AG04449 (cell line): ENCODE measurements at regions of chr3 and their contacts with region 1.

Region 1: DNA sequence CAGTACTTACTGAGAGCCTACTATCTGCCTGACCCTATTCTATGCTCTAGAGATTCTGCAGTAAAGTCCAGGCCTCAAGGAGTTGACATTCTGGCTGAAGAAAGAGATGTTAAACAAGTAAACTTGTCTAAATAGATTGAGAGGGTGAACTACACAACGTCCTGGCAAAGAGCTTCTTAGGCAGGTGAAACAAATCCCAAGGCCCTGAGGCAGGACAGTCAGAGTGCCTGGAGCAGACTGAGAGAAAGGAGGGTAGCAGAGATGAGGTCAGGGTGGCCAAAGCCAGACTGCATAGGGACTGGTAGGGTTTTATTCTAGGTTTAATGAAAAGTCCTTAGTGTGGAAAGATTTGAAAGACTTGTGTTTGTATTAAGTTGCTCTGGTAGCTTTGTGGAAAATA is 84.5 kb upstream of the ATP11B start:
- DNase-seq: no peak
- H3K4me3 ChIP-seq: no peak overlapping the region
- CTCF ChIP-seq: no peak

Region 2: GRCh38 chr3:182697345-182697919 is 11.4 kb before region 1 on chr3:
- CTCF ChIA-PET with region 1: interaction called, 10 read pairs
- POLR2A ChIA-PET with region 1: no interaction called
- DNase-seq: no peak
- H3K4me3 ChIP-seq: no peak overlapping the region
- CTCF ChIP-seq: no peak